HEK293 (cell line): ENCODE measurements at regions of chr12 and their contacts with region 1.

Region 1: GRCh38 chr12:111413442-111414086 is 7.8 kb downstream of the SH2B3 start:
- H3K4me3 ChIP-seq: no peak overlapping the region
- H3K27ac ChIP-seq: no peak overlapping the region
- H3K4me1 ChIP-seq: 0 out of 2 replicates have a peak, but pooled peaks cover 4% of the 10 kb centered on the region
- CTCF ChIP-seq: no peak

Region 2: GRCh38 chr12:111482462-111482861 is 68.9 kb after region 1 on chr12:
- CTCF ChIA-PET with region 1: no interaction called
- POLR2A ChIA-PET with region 1: interaction called, 13 read pairs
- H3K4me3 ChIP-seq: no peak overlapping the region
- H3K27ac ChIP-seq: no peak overlapping the region
- H3K4me1 ChIP-seq: no peaks in the 10 kb centered on the region
- CTCF ChIP-seq: no peak

Region 3: GRCh38 chr12:111569363-111570083 is 156.0 kb after region 1 on chr12:
- CTCF ChIA-PET with region 1: no interaction called
- POLR2A ChIA-PET with region 1: no interaction called
- H3K4me3 ChIP-seq: no peak overlapping the region
- H3K27ac ChIP-seq: no peak overlapping the region
- H3K4me1 ChIP-seq: peaks cover 6% of the 10 kb centered on the region; the same call in 1 of the 2 replicates
- CTCF ChIP-seq: no peak